Activated CD4-positive, alpha-beta memory T cell treated with anti-CD3 and anti-CD28 coated beads, Interleukin-2, amount 10 ng/mL, durations not matched to agents 7 days and 5 days (primary cell): ENCODE measurements at regions of chr9 and their contacts with region 1.

Region 1: GRCh38 chr9:86202338-86202882 is 57.0 kb downstream of the C9orf153 start:
- DNase-seq: peak; percentile 24
- H3K4me3 Mint-ChIP-seq: no peak overlapping the region
- H3K27ac Mint-ChIP-seq: no peak overlapping the region
- H3K4me1 Mint-ChIP-seq: peaks cover 8% of the 10 kb centered on the region
- H3K27me3 Mint-ChIP-seq: peaks cover 3% of the 10 kb centered on the region

Region 2: DNA sequence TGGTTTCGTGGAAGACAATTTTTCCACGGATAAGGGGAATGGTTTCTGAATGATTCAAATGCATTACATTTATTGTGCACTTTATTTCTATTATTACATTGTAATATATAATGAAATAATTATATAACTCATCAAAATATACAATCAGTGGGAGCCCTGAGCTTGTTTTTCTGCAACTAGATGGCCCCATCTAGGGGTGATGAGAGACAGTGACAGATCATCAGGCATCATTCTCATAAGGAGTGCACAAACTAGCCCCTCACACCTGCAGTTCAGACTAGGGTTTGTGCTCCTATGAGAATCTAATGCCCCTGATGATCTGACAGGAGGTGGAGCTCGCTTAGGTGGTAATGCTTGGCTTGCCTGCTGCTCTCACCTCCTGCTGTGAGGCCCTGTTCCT is 73.6 kb after region 1 on chr9:
- CTCF ChIA-PET with region 1: interaction called, 10 read pairs
- POLR2A ChIA-PET with region 1: no interaction called
- DNase-seq: no peak
- H3K4me3 Mint-ChIP-seq: no peak overlapping the region
- H3K27ac Mint-ChIP-seq: no peak overlapping the region
- H3K4me1 Mint-ChIP-seq: peaks cover 23% of the 10 kb centered on the region
- H3K27me3 Mint-ChIP-seq: no peaks in the 10 kb centered on the region